AG04450 (cell line): ENCODE measurements at regions of chr1 and their contacts with region 1.

Region 1: GRCh38 chr1:17856496-17857108 is 101.5 kb downstream of the ACTL8 start:
- DNase-seq: no peak
- H3K4me3 ChIP-seq: no peak overlapping the region
- H3K27ac ChIP-seq: no peak overlapping the region
- H3K27me3 ChIP-seq: peaks cover 3% of the 10 kb centered on the region
- CTCF ChIP-seq: no peak

Region 2: DNA sequence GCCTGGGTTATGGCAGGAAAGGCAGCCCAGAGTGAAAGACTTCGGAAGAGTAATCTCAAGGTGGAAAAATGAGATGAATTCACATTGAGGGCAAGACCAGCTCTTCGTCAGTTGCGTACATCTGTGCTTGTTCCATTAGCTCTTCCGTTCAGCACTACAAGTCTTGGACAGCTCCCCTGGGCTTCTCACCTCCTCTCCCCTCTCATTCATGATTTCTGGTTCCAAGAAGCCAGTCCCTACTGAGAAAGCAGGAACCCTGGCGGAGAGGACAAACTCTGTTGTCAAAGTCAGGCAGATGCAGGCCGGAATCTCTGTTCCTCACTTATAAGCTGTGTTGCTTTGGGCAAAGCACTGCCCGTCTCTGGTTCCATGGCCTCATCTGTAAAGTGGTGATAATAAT is 25.0 kb before region 1 on chr1:
- CTCF ChIA-PET with region 1: interaction called, 10 read pairs
- POLR2A ChIA-PET with region 1: no interaction called
- DNase-seq: peak; percentile 24
- H3K4me3 ChIP-seq: no peak overlapping the region
- H3K27ac ChIP-seq: no peak overlapping the region
- H3K27me3 ChIP-seq: peaks cover 11% of the 10 kb centered on the region
- CTCF ChIP-seq: no peak